ENCODE measurements at regions of chr18 and their contacts with region 1.

Region 1: GRCh38 chr18:76374330-76375281 is 120.4 kb downstream of the ZNF516 start:
- DNase-seq: peak in 8 of 9 donors; percentile 42 to 65 (median 55)
- ATAC-seq: peak; percentile 60
- H3K4me3 ChIP-seq: peak overlapping the region; percentile 19
- H3K4me3 Mint-ChIP-seq: peak overlapping the region; percentile 51 to 79 (median 70)
- H3K27ac ChIP-seq: peak overlapping the region; percentile 41
- H3K27ac Mint-ChIP-seq: peak overlapping the region; percentile 46 to 95 (median 85)
- H3K4me1 ChIP-seq: peaks cover 17 to 47% of the 10 kb centered on the region in 2 donors
- H3K4me1 Mint-ChIP-seq: peaks cover 42 to 62% (median 52%) of the 10 kb centered on the region in 7 donors
- H3K27me3 ChIP-seq: no peaks in the 10 kb centered on the region
- H3K27me3 Mint-ChIP-seq: peaks cover 0 to 8% (median 0%) of the 10 kb centered on the region in 5 donors

Region 2: GRCh38 chr18:77067291-77068061 is 692.9 kb after region 1 on chr18:
- CTCF ChIA-PET with region 1: no interaction called
- POLR2A ChIA-PET with region 1: no interaction called
- intact Hi-C with region 1: loop called in 1 of 2 experiments (anchors 10 kb)
- DNase-seq: peak in 1 of 9 donors; percentile 74
- ATAC-seq: peak; percentile 60
- H3K4me3 ChIP-seq: peak overlapping the region; percentile 35
- H3K4me3 Mint-ChIP-seq: peak overlapping the region; percentile 54 to 85 (median 70)
- H3K27ac ChIP-seq: peak overlapping the region; percentile 52
- H3K27ac Mint-ChIP-seq: peak overlapping the region; percentile 88 to 100 (median 97)
- H3K4me1 ChIP-seq: peaks cover 85 to 100% of the 10 kb centered on the region in 2 donors
- H3K4me1 Mint-ChIP-seq: peaks cover 70 to 100% (median 96%) of the 10 kb centered on the region in 7 donors
- H3K27me3 ChIP-seq: no peaks in the 10 kb centered on the region
- H3K27me3 Mint-ChIP-seq: no peaks in the 10 kb centered on the region

Measured in naive thymus-derived CD4-positive, alpha-beta T cell (primary cell).